ENCODE measurements at regions of chr7 and their contacts with region 1.

Region 1: DNA sequence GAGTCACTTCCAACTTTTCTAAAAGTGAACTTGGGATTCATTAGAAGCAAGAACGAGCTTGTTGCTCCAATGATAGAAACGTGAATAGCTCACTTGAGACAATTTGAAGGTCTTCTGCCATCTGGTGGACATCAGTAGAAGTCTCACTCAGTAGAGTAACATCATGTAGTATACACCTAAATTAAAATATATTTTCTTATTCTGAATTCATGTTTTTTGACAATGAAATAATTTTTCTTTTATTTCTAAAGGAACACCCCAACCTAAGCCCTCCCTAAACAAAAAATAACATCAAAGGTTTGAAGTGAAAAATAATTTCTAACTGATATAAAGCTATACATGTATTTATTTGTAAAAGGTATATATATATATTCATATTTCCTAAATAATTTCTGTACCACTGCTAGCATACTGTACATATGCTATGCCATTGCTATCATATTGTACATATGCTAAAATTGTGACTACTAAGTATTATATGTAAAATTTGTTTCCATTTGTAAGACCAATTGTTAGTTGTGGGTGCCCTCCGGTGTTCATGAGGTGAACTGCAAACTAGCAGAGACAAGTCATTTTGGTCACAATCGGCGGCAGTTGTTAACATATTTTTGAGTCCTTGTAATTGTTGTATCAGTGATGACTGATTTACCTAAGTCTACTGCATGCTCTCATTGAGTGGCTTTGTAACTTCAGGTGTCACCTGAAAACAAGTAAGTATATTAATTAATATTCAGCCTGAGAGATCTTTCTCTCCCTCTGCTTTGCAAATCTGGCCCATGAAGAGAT is 121.9 kb downstream of the PTPRZ1 start:
- DNase-seq: peak; percentile 29 to 68
- H3K4me3 ChIP-seq: no peak overlapping the region
- H3K27ac ChIP-seq: no peak overlapping the region
- H3K4me1 ChIP-seq: no peaks in the 10 kb centered on the region
- H3K27me3 ChIP-seq: no peaks in the 10 kb centered on the region
- CTCF ChIP-seq: peak; percentile 43 to 82 (median 75)
- EP300 ChIP-seq: no peak
- POLR2A ChIP-seq: no peak
- RAD21 ChIP-seq: peak; percentile 92 to 94

Region 2: GRCh38 chr7:121547544-121548092 is 447.2 kb before region 1 on chr7:
- CTCF ChIA-PET with region 1: interaction called, 14 read pairs
- POLR2A ChIA-PET with region 1: no interaction called
- DNase-seq: no peak
- H3K4me3 ChIP-seq: no peak overlapping the region
- H3K27ac ChIP-seq: no peak overlapping the region
- H3K4me1 ChIP-seq: no peaks in the 10 kb centered on the region
- H3K27me3 ChIP-seq: no peaks in the 10 kb centered on the region
- CTCF ChIP-seq: peak in 2 of 3 experiments; percentile 57 to 71; a peak in 3 of 4 replicates
- EP300 ChIP-seq: no peak
- POLR2A ChIP-seq: no peak
- RAD21 ChIP-seq: peak; percentile 88 to 92

Region 3: GRCh38 chr7:121605317-121605680 is 389.5 kb before region 1 on chr7:
- CTCF ChIA-PET with region 1: interaction called, 11 read pairs
- POLR2A ChIA-PET with region 1: no interaction called
- DNase-seq: no peak
- H3K4me3 ChIP-seq: no peak overlapping the region
- H3K27ac ChIP-seq: no peak overlapping the region
- H3K4me1 ChIP-seq: no peaks in the 10 kb centered on the region
- H3K27me3 ChIP-seq: no peaks in the 10 kb centered on the region
- CTCF ChIP-seq: peak in 1 of 3 experiments; percentile 17; a peak in 2 of 4 replicates
- EP300 ChIP-seq: no peak
- POLR2A ChIP-seq: no peak
- RAD21 ChIP-seq: peak; percentile 19 to 33; a peak in 3 of 4 replicates

Region 4: GRCh38 chr7:121810831-121811672 is 183.8 kb before region 1 on chr7:
- CTCF ChIA-PET with region 1: interaction called, 10 read pairs
- POLR2A ChIA-PET with region 1: no interaction called
- DNase-seq: no peak
- H3K4me3 ChIP-seq: no peak overlapping the region
- H3K27ac ChIP-seq: no peak overlapping the region
- H3K4me1 ChIP-seq: peaks cover 3 to 9% (median 6%) of the 10 kb centered on the region in 4 experiments; a peak in 5 of 7 replicates
- H3K27me3 ChIP-seq: no peaks in the 10 kb centered on the region
- CTCF ChIP-seq: no peak
- EP300 ChIP-seq: no peak
- POLR2A ChIP-seq: no peak
- RAD21 ChIP-seq: no peak

Region 5: GRCh38 chr7:121882731-121883130 is 112.1 kb before region 1 on chr7:
- CTCF ChIA-PET with region 1: interaction called, 13 read pairs
- POLR2A ChIA-PET with region 1: no interaction called
- DNase-seq: no peak
- H3K4me3 ChIP-seq: no peak overlapping the region
- H3K27ac ChIP-seq: no peak overlapping the region
- H3K4me1 ChIP-seq: peaks cover 2 to 15% (median 10%) of the 10 kb centered on the region in 4 experiments; a peak in 5 of 7 replicates
- H3K27me3 ChIP-seq: no peaks in the 10 kb centered on the region
- CTCF ChIP-seq: no peak
- EP300 ChIP-seq: no peak
- POLR2A ChIP-seq: no peak
- RAD21 ChIP-seq: no peak

Region 6: DNA sequence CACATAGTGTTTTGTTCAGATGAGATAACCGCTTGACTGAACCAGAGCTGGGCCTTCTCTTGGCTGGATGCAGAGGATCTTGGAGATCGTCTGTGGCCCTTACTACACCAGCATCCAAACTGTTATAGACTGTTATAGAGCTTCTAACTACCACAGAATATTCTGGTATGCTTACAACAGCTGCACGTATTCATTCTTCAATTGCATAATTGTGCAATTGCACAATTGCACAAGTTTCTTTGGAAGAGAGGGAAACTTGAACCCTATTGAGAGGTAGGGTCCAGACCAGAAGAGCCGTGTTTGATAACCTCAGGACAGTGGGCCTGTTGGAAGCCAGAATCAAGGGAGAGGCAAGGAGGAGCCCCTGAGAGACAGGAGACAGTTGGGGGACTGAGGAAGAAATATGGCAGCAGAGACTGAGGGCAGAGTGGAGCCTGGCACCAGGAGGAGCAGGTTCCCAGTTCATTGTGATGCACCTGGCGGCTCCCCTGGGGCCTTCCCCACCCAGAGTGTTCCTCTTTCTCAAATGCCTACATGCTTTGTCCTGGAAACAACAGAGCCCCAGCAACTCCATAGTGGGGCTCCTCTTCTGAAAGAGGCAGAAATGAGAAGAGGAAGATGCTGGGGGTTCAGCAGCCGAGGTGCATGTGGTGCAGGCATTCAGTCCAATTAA is 57.7 kb before region 1 on chr7:
- CTCF ChIA-PET with region 1: interaction called, 27 read pairs
- POLR2A ChIA-PET with region 1: no interaction called
- DNase-seq: peak in 1 of 2 experiments; percentile 33
- H3K4me3 ChIP-seq: peak overlapping the region in 1 of 4 experiments; percentile 37; a peak in 1 of 8 replicates
- H3K27ac ChIP-seq: peak overlapping the region; percentile 88
- H3K4me1 ChIP-seq: peaks cover 10 to 46% (median 29%) of the 10 kb centered on the region in 4 experiments; a peak in 6 of 7 replicates
- H3K27me3 ChIP-seq: no peaks in the 10 kb centered on the region
- CTCF ChIP-seq: no peak
- EP300 ChIP-seq: 0 out of 3 replicates have a peak, but pooled peaks of 1 of the 2 experiments have one; percentile 37
- POLR2A ChIP-seq: peak in 1 of 2 experiments; percentile 44; a peak in 2 of 3 replicates
- RAD21 ChIP-seq: no peak; a peak in 1 of 4 replicates

Region 7: GRCh38 chr7:122006687-122007086 is 11.9 kb after region 1 on chr7:
- CTCF ChIA-PET with region 1: interaction called, 16 read pairs
- POLR2A ChIA-PET with region 1: no interaction called
- DNase-seq: no peak
- H3K4me3 ChIP-seq: no peak overlapping the region
- H3K27ac ChIP-seq: no peak overlapping the region
- H3K4me1 ChIP-seq: no peaks in the 10 kb centered on the region; a peak in 2 of 7 replicates
- H3K27me3 ChIP-seq: no peaks in the 10 kb centered on the region
- CTCF ChIP-seq: peak in 1 of 3 experiments; percentile 36; a peak in 1 of 4 replicates
- EP300 ChIP-seq: no peak
- POLR2A ChIP-seq: no peak
- RAD21 ChIP-seq: peak; percentile 66 to 67